ENCODE measurements at regions of chr19 and their contacts with region 1.

Region 1: GRCh38 chr19:35740423-35741202 is 1.6 kb downstream of the IGFLR1 start:
- DNase-seq: peak; percentile 97
- H3K4me3 Mint-ChIP-seq: peak overlapping the region; percentile 88
- H3K27ac Mint-ChIP-seq: peak overlapping the region; percentile 92
- H3K4me1 Mint-ChIP-seq: peaks cover 50% of the 10 kb centered on the region
- H3K27me3 Mint-ChIP-seq: no peaks in the 10 kb centered on the region

Region 2: GRCh38 chr19:35727053-35727947 is 13.3 kb before region 1 on chr19:
- CTCF ChIA-PET with region 1: interaction called, 13 read pairs
- POLR2A ChIA-PET with region 1: no interaction called
- DNase-seq: no peak
- H3K4me3 Mint-ChIP-seq: no peak overlapping the region
- H3K27ac Mint-ChIP-seq: no peak overlapping the region
- H3K4me1 Mint-ChIP-seq: no peaks in the 10 kb centered on the region
- H3K27me3 Mint-ChIP-seq: no peaks in the 10 kb centered on the region